ENCODE measurements at regions of chr7 and their contacts with region 1.

Region 1: GRCh38 chr7:134724606-134725005 is 54.8 kb upstream of the CALD1 start:
- DNase-seq: peak; percentile 41
- ATAC-seq: peak; percentile 99
- H3K4me3 Mint-ChIP-seq: no peak overlapping the region
- H3K27ac Mint-ChIP-seq: no peak overlapping the region
- H3K4me1 Mint-ChIP-seq: no peaks in the 10 kb centered on the region
- H3K27me3 Mint-ChIP-seq: no peaks in the 10 kb centered on the region
- CTCF ChIP-seq: no peak

Region 2: DNA sequence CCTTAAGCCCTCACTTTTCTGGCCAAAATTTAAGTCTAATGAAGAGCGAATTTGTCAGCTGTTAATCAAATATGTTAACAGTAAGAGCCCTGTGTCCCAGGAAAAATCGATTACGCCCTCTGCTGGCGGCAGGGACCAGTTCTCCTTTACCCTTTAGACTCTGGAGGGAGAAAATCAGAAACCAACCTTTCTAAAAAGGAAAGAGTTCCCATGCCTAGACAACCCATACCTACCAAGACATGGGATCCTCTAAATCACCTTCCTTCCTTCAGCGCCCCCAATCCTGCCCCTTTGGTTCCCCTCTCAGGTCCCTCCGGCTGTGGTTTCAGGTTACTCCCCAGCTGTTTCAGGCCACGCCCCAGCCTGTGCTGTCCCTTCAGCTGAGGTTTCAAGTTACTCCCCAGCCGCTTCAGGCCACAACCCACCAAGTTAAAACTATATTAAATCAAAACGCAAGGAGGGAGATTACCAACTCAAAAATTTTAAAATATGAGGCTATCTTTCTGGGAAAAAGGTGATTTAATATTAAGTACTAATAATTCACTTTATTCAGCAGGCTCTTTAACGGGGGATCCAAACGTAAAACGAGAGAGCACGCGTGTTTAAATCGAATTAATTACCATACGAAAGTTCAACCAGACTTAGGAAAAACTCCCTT is 177.1 kb before region 1 on chr7:
- CTCF ChIA-PET with region 1: no interaction called
- POLR2A ChIA-PET with region 1: no interaction called
- DNase-seq: peak; percentile 86
- ATAC-seq: peak; percentile 93
- H3K4me3 Mint-ChIP-seq: peak overlapping the region; percentile 73
- H3K27ac Mint-ChIP-seq: peak overlapping the region; percentile 94
- H3K4me1 Mint-ChIP-seq: peaks cover 40% of the 10 kb centered on the region
- H3K27me3 Mint-ChIP-seq: no peaks in the 10 kb centered on the region; the same call in 1 of the 2 replicates
- CTCF ChIP-seq: peak; percentile 74

Region 3: DNA sequence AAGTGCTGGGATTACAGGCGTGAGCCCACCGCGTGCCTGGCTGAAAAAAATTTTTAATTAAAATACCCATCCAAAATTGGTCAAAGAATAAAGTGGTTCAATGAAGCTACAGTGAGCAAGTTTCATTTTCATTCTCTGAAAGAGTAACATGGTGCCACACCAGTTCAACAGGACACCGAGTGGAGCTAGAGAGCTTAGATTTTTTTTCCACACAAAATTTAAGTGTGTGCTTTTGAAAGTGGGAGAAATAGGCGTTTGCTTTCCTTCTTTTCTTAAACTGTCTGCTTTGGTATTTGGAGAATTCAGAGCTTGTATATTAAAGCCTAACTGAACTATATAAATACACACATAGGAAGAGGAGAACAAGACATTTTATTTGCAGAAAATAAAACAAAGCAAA is 34.6 kb before region 1 on chr7:
- CTCF ChIA-PET with region 1: interaction called, 14 read pairs
- POLR2A ChIA-PET with region 1: no interaction called
- DNase-seq: no peak
- ATAC-seq: no peak
- H3K4me3 Mint-ChIP-seq: no peak overlapping the region
- H3K27ac Mint-ChIP-seq: no peak overlapping the region
- H3K4me1 Mint-ChIP-seq: peaks cover 5% of the 10 kb centered on the region; the same call in 1 of the 2 replicates
- H3K27me3 Mint-ChIP-seq: no peaks in the 10 kb centered on the region
- CTCF ChIP-seq: no peak

Region 4: DNA sequence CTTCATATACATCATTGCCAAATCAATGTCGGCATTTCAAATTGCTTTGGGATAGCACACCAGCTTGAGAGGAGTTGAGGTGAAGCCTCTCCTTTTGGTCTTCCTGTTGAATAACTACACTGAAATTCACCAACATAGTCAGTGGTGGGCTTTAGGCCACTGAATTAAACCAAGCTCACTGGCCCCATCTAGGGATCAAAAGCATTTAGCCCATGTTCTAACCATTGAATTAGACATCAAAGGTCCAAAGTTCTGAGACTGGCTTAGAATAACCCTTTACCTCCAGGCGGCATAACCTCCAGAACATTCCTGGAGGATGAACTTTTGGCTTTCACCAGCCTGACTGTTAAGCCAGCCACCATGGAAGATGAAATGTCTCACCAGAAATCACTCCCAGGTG is 23.3 kb before region 1 on chr7:
- CTCF ChIA-PET with region 1: interaction called, 16 read pairs
- POLR2A ChIA-PET with region 1: no interaction called
- DNase-seq: no peak
- ATAC-seq: peak; percentile 72
- H3K4me3 Mint-ChIP-seq: no peak overlapping the region
- H3K27ac Mint-ChIP-seq: no peak overlapping the region
- H3K4me1 Mint-ChIP-seq: peaks cover 24% of the 10 kb centered on the region
- H3K27me3 Mint-ChIP-seq: no peaks in the 10 kb centered on the region
- CTCF ChIP-seq: 0 out of 2 replicates have a peak, but pooled peaks have one; percentile 32

Region 5: GRCh38 chr7:134741907-134742635 is 17.5 kb after region 1 on chr7:
- CTCF ChIA-PET with region 1: interaction called, 27 read pairs
- POLR2A ChIA-PET with region 1: interaction called, 5 read pairs
- DNase-seq: peak; percentile 62
- ATAC-seq: peak; percentile 95
- H3K4me3 Mint-ChIP-seq: no peak overlapping the region
- H3K27ac Mint-ChIP-seq: peak overlapping the region; percentile 79; the same call in 1 of the 2 replicates
- H3K4me1 Mint-ChIP-seq: peaks cover 33% of the 10 kb centered on the region
- H3K27me3 Mint-ChIP-seq: no peaks in the 10 kb centered on the region
- CTCF ChIP-seq: no peak